ENCODE measurements at regions of chr11 and their contacts with region 1.

Region 1: DNA sequence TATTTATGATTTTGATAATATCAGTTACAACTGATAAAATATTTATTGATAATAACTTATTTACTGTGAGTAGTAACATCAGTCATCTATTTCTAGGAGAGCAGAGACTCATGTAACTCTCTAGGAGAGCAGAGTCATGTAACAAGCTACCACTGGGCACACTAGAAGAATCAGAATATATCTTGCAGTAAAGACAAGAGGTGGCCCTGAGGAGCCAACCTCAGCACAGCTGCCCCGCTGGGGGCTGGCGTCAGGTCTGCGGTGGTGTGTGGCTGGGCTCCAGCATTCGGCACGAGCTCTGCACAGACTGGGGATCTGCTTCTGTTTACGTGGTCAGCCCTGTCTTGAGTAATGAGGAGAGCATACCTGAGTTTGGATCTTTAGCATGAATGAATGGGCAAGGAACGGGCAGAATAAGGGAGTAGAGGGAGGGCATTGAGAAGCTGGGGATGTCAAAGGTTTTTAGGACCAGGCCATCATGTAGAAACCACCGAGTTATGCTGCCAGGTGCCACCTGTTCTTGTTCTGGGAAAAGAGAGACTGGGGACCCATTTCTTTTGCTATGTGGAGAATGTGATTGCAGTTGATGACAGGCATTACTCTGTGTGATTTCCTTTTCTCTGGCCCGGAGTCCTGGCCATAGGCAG is 51.1 kb upstream of the HEPHL1 start:
- DNase-seq: no peak
- ATAC-seq: no peak
- H3K4me3 Mint-ChIP-seq: no peak overlapping the region
- H3K27ac Mint-ChIP-seq: no peak overlapping the region
- H3K4me1 Mint-ChIP-seq: no peaks in the 10 kb centered on the region
- H3K27me3 Mint-ChIP-seq: peaks cover 2% of the 10 kb centered on the region

Region 2: DNA sequence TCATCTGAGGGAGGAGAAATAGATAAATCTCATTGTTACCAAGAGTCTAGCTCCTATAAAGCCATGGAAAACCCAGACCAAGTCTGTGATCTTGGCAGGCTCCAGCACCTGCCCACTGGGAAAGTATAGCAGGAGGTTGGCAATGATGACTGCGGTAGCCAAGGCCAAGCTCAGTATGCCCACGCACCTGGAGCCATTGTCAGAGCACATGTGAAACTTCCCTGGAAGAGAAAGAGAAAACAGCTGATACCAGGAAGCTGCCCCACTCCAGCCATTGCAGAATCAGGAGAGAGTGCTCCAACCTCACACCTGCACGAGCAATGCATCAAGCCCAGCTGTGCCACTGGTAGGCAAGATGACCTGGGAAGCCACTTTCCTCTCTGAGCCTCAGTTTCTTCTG is 11.1 kb before region 1 on chr11:
- CTCF ChIA-PET with region 1: no interaction called
- POLR2A ChIA-PET with region 1: no interaction called
- intact Hi-C with region 1: loop called (anchors 1 kb)
- DNase-seq: no peak
- ATAC-seq: no peak
- H3K4me3 Mint-ChIP-seq: no peak overlapping the region
- H3K27ac Mint-ChIP-seq: no peak overlapping the region
- H3K4me1 Mint-ChIP-seq: no peaks in the 10 kb centered on the region
- H3K27me3 Mint-ChIP-seq: no peaks in the 10 kb centered on the region

Measured in activated CD4-positive, alpha-beta T cell treated with anti-CD3 and anti-CD28 coated beads for 36 hours (primary cell).